Right ventricle myocardium inferior (tissue), 1 donor: ENCODE measurements at regions of chr6 and their contacts with region 1.

Region 1: GRCh38 chr6:158704181-158704822 is 54.4 kb downstream of the SYTL3 start:
- DNase-seq: peak; percentile 91
- ATAC-seq: peak; percentile 89

Region 2: DNA sequence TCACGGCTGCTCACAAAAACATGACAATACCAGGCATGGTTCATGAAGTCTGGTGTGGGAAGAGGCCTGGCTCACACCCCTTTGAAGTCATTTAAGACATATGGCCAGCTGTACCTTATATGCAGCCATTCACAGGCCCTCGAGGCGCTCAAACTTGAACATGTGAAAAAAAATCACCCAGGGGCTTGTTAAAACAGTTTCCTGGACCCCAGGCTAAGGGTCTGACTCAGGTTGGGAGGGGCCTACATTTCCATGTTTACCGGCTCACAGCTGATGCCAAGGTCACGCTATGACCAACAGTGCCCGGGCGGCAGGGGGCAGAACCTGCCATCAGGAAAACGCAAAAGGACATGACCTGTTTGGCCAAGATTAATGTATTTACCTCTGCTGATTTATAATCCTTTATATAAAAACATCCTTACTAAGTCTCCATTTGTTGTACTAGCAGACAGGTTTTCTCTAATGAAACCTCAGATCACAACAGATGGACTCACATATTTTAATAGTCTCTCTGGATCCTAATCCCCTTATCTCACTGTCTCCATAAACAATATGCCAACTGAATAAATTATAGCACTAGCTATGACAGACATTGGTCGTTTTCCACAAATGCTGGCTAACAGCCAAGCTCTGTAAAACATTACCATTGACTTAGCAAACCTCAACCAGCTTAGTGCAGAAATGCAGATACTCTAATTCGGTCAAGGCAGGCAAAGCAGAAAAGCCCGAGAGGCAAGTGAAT is 94.9 kb after region 1 on chr6:
- intact Hi-C with region 1: loop called (anchors 2 kb)
- DNase-seq: no peak
- ATAC-seq: peak; percentile 18

Region 3: GRCh38 chr6:159125014-159125609 is 420.8 kb after region 1 on chr6:
- intact Hi-C with region 1: loop called (anchors 5 kb)
- DNase-seq: no peak
- ATAC-seq: no peak